HEK293T (cell line): ENCODE measurements at regions of chr19 and their contacts with region 1.

Region 1: GRCh38 chr19:11374433-11375142 is at the start of gene SWSAP1:
- DNase-seq: peak; percentile 94

Region 2: DNA sequence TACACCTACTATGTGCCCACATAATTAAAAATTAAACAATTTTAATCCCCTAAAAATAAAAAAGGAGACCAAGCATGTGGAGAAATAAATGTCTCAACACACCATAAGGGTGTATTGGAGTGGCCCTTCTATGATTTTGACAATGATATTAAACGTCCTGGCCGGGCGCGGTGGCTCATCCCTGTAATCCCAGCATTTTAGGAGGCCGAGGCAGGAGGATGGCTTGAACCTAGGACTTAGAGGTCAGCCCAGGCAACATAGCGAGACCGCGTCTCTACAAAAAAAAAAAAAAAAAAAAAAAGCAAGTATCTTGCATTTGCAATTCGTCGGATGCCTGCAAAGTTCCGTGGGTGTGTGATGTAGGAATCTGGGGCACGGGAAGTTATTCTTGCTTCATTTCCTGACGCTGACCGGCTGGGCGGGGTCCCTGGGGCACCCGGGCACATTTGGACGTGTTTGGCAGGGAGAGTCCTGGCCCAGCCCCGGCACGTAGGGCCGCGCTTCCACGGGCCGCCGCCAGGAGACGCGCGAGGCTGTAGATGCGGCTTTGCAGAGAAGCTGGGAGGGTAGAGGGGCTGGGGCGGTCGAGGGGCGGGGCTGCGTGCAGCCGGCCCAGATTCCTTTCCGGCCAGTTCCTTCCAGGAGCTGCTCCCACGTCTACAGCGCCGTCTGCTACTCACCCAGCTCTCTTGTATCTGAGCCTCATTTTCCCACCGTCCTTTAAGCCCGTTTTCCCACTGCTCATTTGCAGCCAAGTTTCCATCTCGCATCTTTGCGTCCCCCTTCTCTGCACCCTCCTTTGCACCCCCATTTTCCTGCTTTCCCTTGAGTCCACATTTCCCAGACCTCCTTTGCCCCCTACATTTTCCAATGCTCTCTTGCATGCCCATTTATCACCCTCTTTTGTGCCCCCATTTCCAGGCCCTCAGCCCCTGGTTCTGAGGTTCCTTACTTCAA is 80.9 kb before region 1 on chr19:
- CTCF ChIA-PET with region 1: interaction called, 7 read pairs
- POLR2A ChIA-PET with region 1: interaction called, 14 read pairs
- DNase-seq: peak; percentile 94

Region 3: GRCh38 chr19:11324079-11324661 is 50.4 kb before region 1 on chr19:
- CTCF ChIA-PET with region 1: interaction called, 4 read pairs
- POLR2A ChIA-PET with region 1: interaction called, 13 read pairs
- DNase-seq: peak; percentile 58

Region 4: DNA sequence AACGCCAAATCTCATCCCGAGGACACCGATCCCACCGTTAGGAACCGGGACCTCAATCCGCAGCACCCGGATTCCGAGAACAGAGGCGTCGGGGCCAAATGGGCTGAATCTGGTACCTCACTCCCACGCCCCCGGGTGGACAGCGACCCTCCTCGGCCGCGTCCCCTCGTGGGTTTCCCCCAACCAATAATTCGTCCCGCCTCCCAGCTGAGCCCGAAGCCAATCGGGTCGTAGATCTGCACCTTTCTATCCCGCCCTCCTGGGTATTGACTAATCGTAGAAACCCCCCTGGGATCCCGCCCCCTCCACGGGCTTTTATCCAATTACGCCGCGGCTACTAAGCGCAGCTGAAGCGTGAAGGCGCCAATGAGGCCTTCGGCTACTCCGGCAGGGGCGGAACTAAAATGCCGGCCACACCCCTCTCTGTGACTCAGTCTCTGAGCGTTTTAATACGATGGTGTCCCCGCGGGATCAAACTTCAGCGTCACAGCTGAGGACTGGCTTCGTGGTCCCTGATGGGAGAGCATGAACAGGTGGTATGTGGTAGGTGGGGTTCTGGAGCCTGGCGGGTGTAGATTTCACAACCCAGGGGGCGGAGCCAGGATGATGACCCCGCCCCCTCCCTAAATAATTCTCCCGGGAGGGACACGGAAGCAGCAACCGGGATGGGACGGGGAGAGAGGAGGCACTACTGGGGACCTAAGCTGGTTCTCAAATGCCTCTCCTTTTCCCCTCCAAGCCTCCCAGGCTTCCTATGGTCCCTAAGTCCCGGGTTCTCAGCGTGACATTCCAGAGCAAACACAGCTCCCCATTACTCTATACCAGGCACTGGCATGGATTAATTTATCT is 28.3 kb before region 1 on chr19 and contains the starts of genes CCDC159 and TMEM205:
- CTCF ChIA-PET with region 1: interaction called, 5 read pairs
- POLR2A ChIA-PET with region 1: interaction called, 20 read pairs
- DNase-seq: peak; percentile 91

Region 5: DNA sequence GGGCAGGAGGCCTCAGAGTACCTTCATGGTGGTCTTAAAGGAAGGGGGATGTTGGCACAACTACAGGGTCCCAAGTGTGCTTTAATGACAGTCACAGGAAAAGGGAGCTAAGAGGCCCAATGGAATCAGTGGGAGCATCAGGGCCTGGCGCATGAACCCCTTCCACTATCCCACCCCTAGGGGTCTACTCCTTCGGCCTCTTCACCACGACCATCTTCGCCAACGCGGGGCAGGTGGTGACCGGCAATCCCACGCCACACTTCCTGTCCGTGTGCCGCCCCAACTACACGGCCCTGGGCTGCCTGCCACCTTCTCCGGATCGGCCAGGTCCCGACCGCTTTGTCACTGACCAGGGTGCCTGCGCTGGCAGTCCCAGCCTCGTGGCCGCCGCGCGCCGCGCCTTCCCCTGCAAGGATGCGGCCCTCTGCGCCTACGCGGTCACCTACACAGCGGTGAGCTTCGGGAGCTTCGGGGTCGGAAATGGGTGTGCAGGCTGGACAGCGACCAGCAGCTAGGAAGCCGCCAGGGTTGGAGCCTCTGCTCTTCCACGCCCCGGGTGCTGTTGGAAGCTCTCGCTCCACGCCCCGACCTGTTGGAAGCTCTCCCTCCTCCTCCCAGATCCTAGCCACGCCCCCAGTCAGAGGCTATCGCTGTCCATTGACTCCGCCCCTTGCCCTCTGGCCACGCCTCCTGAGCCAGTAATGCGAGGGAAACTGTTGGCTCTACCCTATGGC is 13.4 kb before region 1 on chr19:
- CTCF ChIA-PET with region 1: no interaction called
- POLR2A ChIA-PET with region 1: interaction called, 14 read pairs
- DNase-seq: peak; percentile 64

Region 6: GRCh38 chr19:11482384-11483050 is 107.9 kb after region 1 on chr19:
- CTCF ChIA-PET with region 1: interaction called, 13 read pairs
- POLR2A ChIA-PET with region 1: interaction called, 12 read pairs
- DNase-seq: peak; percentile 96